Activated CD8-positive, alpha-beta T cell treated with anti-CD3 and anti-CD28 coated beads, Interleukin-2, amount 10 ng/mL, durations not matched to agents 7 days and 5 days (primary cell): ENCODE measurements at regions of chr10 and their contacts with region 1.

Region 1: GRCh38 chr10:29461042-29461441 is 172.2 kb downstream of the LYZL1 start:
- DNase-seq: no peak
- ATAC-seq: no peak
- H3K4me3 Mint-ChIP-seq: no peak overlapping the region
- H3K27ac Mint-ChIP-seq: no peak overlapping the region
- H3K4me1 Mint-ChIP-seq: no peaks in the 10 kb centered on the region
- H3K27me3 Mint-ChIP-seq: no peaks in the 10 kb centered on the region

Region 2: DNA sequence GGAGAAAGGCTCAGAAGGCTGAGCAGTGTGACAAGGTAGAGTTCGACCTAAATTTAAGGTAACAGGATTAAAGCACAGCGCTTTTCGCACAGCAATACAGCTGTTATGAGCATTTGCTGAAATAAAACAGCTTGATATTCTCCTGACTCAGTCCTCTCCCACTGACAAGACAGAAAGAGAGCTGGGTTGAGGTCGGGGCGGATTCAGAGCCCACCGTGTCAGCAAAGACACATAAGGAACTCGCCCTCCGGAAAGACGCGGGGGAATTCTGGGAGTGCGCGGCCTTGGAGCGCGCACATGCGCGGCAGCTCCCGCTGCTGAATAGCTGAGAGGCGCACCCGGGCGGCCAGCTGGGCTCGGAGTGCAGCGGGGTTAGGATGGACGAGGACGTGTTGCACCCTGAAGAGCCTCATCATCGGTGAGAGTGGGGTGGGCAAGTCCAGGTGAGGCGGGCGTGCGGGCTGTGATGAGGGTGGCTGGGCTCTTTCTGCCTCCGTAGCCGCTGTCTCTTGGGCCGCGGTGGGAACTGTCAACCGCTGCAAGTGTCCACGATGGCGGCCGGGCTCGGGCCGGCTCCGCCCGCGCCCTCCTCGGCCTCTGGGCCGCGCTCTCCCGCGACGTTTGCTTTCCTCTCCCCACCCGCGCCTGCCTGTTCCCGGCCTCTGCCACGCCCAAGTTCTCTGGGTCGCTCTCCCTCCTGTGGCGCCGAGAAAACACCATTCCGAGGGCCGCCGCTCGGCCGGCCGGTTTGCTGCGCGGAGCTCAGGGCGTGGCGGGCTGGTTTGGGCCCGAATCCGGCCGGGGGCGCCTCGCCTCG is 51.6 kb before region 1 on chr10:
- CTCF ChIA-PET with region 1: no interaction called
- POLR2A ChIA-PET with region 1: no interaction called
- DNase-seq: peak; percentile 55
- ATAC-seq: peak; percentile 87
- H3K4me3 Mint-ChIP-seq: peak overlapping the region; percentile 90
- H3K27ac Mint-ChIP-seq: peak overlapping the region; percentile 87
- H3K4me1 Mint-ChIP-seq: peaks cover 27% of the 10 kb centered on the region
- H3K27me3 Mint-ChIP-seq: no peaks in the 10 kb centered on the region

Region 3: DNA sequence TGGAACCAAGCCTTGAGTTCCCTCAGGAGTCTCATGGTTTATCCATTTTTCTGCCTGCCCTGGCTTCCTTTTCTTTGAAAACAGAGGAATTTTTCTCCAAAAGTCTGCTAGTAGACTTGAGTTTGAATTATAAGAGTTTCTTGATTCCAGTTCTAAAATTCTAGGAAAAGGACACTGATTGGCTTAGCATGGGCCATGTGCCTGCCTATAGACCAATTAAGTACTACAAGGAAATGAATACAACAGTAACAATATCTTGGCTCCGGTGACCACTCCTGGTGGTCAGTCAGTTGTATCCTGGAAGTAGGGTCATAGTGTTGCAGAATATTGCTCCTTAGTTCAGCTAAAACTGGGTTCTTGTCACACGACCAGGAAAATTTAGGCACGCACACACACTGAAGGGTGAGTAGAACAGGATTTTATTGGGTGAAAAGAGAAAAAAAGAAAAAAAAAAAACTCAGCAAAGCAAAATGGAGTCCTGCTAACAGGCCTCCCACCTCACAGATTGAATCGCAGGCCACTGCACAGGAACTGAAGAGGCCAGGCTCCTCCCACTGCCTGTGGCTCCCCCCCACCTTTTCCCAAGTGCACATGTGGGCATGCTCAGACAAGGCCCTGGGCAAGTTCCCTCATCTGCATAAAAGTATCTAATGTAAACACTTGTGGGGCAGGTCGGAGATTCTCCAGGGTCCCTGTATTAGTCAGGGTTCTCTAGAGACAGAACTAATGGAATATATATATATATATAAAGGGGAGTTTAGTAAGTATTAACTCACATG is 17.1 kb before region 1 on chr10:
- CTCF ChIA-PET with region 1: interaction called, 17 read pairs
- POLR2A ChIA-PET with region 1: no interaction called
- DNase-seq: no peak
- ATAC-seq: no peak
- H3K4me3 Mint-ChIP-seq: no peak overlapping the region
- H3K27ac Mint-ChIP-seq: no peak overlapping the region
- H3K4me1 Mint-ChIP-seq: peaks cover 13% of the 10 kb centered on the region
- H3K27me3 Mint-ChIP-seq: no peaks in the 10 kb centered on the region

Region 4: DNA sequence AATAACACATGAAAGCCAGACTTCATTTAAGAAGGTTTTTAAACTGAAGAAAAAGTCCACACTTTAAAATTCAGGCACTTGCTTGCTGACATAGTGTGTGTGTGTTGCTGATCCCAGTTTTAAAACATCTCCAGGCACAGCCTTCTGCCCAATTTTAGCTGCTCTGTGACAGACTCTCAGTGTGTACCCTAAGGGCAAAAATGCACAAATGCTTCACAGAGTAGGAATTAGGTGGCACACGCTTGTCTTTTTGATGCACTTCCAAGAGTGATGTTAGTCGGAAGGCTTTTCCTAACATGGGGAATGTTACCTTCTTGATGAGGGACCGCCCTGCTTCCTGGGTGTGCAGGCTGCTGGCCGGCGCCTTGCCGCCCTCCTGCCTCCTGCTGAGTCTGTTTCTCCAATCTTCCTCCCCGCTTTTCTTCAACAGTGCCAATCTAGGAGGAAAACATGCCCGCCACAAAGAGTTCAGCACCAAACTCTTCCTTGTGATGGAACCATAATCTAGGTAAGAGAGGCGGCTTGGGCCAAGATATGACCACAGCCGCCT is 51.5 kb after region 1 on chr10:
- CTCF ChIA-PET with region 1: no interaction called
- POLR2A ChIA-PET with region 1: no interaction called
- DNase-seq: no peak
- ATAC-seq: no peak
- H3K4me3 Mint-ChIP-seq: no peak overlapping the region
- H3K27ac Mint-ChIP-seq: no peak overlapping the region
- H3K4me1 Mint-ChIP-seq: peaks cover 5% of the 10 kb centered on the region
- H3K27me3 Mint-ChIP-seq: no peaks in the 10 kb centered on the region

Region 5: DNA sequence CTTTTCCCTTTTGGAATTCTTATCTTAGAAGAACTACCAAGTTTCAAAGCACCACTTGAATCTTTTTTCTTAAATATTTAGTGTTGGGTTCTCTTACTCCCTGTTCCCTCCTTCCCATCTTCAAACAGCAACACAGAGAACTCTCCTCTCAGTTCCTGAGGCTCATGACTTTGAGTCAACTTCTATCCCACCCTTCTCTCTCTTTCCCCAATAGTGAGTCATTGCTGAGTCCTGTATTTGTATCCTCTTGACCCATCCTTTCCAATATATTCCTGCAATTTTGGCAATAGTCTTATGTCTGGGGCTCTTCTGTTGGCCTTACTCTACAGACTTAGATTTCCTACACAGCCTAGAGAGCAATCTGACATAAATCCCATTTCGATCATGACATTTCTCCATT is 619.1 kb after region 1 on chr10:
- CTCF ChIA-PET with region 1: no interaction called
- POLR2A ChIA-PET with region 1: no interaction called
- DNase-seq: no peak
- ATAC-seq: no peak
- H3K4me3 Mint-ChIP-seq: no peak overlapping the region
- H3K27ac Mint-ChIP-seq: no peak overlapping the region
- H3K4me1 Mint-ChIP-seq: no peaks in the 10 kb centered on the region
- H3K27me3 Mint-ChIP-seq: peaks cover 35% of the 10 kb centered on the region